SK-N-SH (cell line): ENCODE measurements at regions of chr15 and their contacts with region 1.

Region 1: GRCh38 chr15:84955089-84955848 is 26.4 kb upstream of the PDE8A start:
- DNase-seq: peak; percentile 81
- H3K4me3 ChIP-seq: peak overlapping the region; percentile 34 to 49
- H3K27ac ChIP-seq: no peak overlapping the region
- H3K4me1 ChIP-seq: peaks cover 4 to 18% of the 10 kb centered on the region in 2 experiments; a peak in 2 of 4 replicates
- H3K27me3 ChIP-seq: no peaks in the 10 kb centered on the region
- CTCF ChIP-seq: peak; percentile 78
- EP300 ChIP-seq: no peak
- RAD21 ChIP-seq: peak; percentile 89

Region 2: DNA sequence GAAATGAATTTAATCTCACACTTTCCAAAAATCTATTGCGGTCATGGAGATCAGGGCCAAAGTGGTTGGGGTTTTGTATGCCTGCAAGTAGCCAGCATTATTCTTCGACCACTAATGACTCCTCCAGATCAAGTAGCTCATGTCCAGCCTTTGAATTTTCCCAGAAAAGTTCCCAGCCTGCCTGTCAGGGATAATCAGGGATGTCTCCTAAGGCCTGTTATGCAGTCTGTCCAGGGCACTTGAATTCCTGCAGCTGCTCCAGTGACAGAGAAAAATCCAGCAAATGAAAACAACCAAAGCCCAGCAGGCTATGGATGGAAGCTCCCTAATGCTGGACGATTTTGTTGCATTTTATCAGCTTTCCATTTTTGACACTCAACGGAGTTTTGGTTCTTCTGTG is 1085.9 kb before region 1 on chr15:
- CTCF ChIA-PET with region 1: no interaction called
- POLR2A ChIA-PET with region 1: no interaction called
- DNase-seq: no peak
- H3K4me3 ChIP-seq: no peak overlapping the region
- H3K27ac ChIP-seq: no peak overlapping the region
- H3K4me1 ChIP-seq: no peaks in the 10 kb centered on the region
- H3K27me3 ChIP-seq: no peaks in the 10 kb centered on the region; the same call in 1 of the 2 replicates
- CTCF ChIP-seq: no peak
- EP300 ChIP-seq: no peak
- RAD21 ChIP-seq: no peak

Region 3: DNA sequence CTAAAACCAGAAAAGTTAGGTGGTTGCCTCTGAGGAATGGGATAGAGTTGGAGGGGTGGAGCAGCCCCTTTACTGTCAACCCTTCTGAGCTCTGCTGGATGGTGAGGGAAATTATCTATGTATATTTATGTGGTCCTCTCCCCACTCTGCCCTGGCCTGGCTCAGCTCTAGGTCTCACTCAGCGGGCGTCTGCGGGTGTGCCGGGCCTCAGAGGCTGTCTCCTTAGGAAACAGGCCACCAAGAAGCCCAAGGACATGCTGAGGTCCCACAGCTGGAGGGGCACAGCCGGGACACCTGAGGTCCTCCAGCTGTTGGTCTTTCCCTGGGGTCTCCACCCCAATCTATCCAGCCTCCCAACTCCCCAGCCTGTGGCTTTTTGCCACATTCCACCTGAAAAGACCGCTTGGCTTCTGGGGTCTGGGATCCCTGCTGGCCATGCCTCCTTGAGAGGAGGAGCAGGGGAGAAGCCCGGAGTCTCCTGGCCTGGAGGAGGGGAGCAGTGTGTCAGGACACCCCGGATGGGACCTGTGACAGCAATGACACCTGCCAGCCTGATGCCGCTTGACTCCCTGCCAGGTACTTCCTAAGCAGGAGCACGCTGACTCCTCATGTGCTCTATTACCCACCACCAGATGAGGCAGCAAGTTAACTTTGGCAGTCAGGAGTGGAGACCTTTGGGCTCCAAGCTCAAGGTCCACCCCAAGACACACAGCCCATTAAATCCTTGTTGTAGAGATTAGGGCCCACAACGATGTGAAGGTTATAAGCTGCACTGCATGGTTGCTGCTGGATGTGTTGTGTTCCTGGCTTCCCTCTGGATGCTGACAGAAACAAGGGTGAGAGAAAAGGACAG is 71.1 kb before region 1 on chr15 and contains the start of gene SLC28A1:
- CTCF ChIA-PET with region 1: no interaction called
- POLR2A ChIA-PET with region 1: no interaction called
- DNase-seq: no peak
- H3K4me3 ChIP-seq: no peak within 1 kb of the TSS
- H3K27ac ChIP-seq: no peak within 1 kb of the TSS
- H3K4me1 ChIP-seq: peaks cover 0 to 9% of the 10 kb centered on the region in 2 experiments; a peak in 1 of 4 replicates
- H3K27me3 ChIP-seq: no peaks in the 10 kb centered on the region
- CTCF ChIP-seq: no peak
- EP300 ChIP-seq: no peak
- RAD21 ChIP-seq: no peak
- polyA plus RNA-seq, gene SLC28A1: not detected in 2 replicates

Region 4: GRCh38 chr15:84915011-84915958 is 40.0 kb before region 1 on chr15:
- CTCF ChIA-PET with region 1: no interaction called
- POLR2A ChIA-PET with region 1: no interaction called
- DNase-seq: peak; percentile 90
- H3K4me3 ChIP-seq: no peak overlapping the region
- H3K27ac ChIP-seq: peak overlapping the region; percentile 71 to 89
- H3K4me1 ChIP-seq: peaks cover 38 to 42% of the 10 kb centered on the region in 2 experiments; a peak in 3 of 4 replicates
- H3K27me3 ChIP-seq: no peaks in the 10 kb centered on the region
- CTCF ChIP-seq: no peak
- EP300 ChIP-seq: peak in 1 of 2 experiments; percentile 76; a peak in 2 of 4 replicates
- RAD21 ChIP-seq: no peak; the same call in 1 of the 2 replicates

Region 5: DNA sequence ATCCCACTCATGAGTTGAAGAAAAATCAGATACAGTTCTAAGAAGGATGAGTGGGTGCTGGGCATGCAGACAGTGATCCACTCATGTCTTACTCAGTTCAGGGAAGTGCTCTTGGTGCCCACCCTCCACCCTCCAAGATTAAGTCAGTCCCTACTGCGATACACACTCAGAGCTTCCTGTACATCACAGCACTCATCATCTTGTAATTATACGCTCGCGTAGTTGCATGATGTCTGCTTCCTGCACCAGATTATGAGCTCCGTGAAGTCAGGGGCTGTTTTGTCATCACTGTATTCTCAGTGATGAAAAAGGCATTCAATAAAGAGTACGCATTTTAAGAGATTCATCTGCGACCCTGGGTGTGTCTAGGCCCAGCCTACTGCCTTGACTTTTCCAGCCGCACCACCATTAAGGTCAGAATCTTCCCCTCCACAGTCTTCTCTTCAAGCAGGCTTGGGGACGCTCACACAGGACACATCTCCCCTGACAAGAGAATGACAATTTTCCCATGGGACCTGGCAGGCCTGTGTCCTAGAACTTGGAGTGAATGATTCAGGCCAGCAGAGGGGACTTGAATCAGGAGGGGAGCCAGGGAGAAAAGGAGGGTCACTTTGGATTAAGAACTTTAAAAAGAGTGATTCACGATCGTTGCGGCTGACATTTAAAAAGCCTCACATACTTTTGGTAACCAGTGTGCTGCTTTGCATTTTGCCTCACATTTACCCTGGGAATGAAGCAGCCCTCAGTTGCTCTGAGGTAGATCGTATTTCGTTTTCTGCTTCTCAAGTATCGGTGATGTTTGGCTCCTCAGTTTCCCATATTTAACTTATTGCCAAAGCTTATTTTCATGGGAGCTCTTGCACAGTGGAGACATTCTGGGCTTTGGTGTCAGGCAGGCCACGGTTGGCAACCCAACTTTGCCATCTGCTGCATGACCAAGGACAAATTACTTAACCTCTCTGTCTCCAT is 18.5 kb after region 1 on chr15:
- CTCF ChIA-PET with region 1: interaction called, 14 read pairs
- POLR2A ChIA-PET with region 1: no interaction called
- DNase-seq: no peak
- H3K4me3 ChIP-seq: no peak overlapping the region
- H3K27ac ChIP-seq: no peak overlapping the region
- H3K4me1 ChIP-seq: no peaks in the 10 kb centered on the region; a peak in 2 of 4 replicates
- H3K27me3 ChIP-seq: no peaks in the 10 kb centered on the region
- CTCF ChIP-seq: no peak
- EP300 ChIP-seq: no peak
- RAD21 ChIP-seq: no peak

Region 6: GRCh38 chr15:84981054-84981710 is 25.9 kb after region 1 on chr15:
- CTCF ChIA-PET with region 1: interaction called, 14 read pairs
- POLR2A ChIA-PET with region 1: interaction called, 4 read pairs
- DNase-seq: peak; percentile 100
- H3K4me3 ChIP-seq: peak overlapping the region; percentile 87 to 88
- H3K27ac ChIP-seq: peak overlapping the region; percentile 88 to 89
- H3K4me1 ChIP-seq: peaks cover 0 to 7% of the 10 kb centered on the region in 2 experiments; a peak in 3 of 4 replicates
- H3K27me3 ChIP-seq: no peaks in the 10 kb centered on the region
- CTCF ChIP-seq: no peak
- EP300 ChIP-seq: peak; percentile 59 to 64; a peak in 3 of 4 replicates
- RAD21 ChIP-seq: no peak

Region 7: GRCh38 chr15:85044251-85044853 is 89.1 kb after region 1 on chr15:
- CTCF ChIA-PET with region 1: interaction called, 49 read pairs
- POLR2A ChIA-PET with region 1: no interaction called
- DNase-seq: peak; percentile 39
- H3K4me3 ChIP-seq: no peak overlapping the region
- H3K27ac ChIP-seq: no peak overlapping the region; a peak in 1 of 4 replicates
- H3K4me1 ChIP-seq: peaks cover 13 to 30% of the 10 kb centered on the region in 2 experiments
- H3K27me3 ChIP-seq: no peaks in the 10 kb centered on the region
- CTCF ChIP-seq: peak; percentile 69
- EP300 ChIP-seq: peak in 1 of 2 experiments; percentile 45; a peak in 1 of 4 replicates
- RAD21 ChIP-seq: peak; percentile 86